ENCODE measurements at regions of chr5 and their contacts with region 1.

Region 1: DNA sequence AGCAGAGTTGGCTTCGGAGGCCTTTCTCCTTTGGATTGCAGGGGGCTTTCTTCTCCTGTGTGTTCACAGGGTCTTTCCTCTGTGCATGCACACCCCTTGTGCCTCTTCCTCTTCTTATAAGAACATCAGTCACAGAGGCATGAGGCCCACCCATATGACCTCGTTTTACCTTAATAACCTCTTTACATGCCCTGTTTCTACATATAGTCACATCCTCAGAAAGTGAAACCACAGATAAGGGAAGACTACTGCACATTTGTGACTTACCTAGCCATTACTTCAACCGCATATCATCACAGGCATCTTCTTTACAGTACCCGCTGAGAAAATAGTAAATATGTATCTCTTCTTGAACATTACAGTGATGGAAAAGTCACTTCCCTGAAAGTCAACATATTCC is 204.9 kb upstream of the TARS1 start:
- DNase-seq: no peak
- H3K4me3 Mint-ChIP-seq: no peak overlapping the region
- H3K27ac Mint-ChIP-seq: peak overlapping the region; percentile 30
- H3K4me1 Mint-ChIP-seq: peaks cover 28% of the 10 kb centered on the region
- H3K27me3 Mint-ChIP-seq: no peaks in the 10 kb centered on the region

Region 2: DNA sequence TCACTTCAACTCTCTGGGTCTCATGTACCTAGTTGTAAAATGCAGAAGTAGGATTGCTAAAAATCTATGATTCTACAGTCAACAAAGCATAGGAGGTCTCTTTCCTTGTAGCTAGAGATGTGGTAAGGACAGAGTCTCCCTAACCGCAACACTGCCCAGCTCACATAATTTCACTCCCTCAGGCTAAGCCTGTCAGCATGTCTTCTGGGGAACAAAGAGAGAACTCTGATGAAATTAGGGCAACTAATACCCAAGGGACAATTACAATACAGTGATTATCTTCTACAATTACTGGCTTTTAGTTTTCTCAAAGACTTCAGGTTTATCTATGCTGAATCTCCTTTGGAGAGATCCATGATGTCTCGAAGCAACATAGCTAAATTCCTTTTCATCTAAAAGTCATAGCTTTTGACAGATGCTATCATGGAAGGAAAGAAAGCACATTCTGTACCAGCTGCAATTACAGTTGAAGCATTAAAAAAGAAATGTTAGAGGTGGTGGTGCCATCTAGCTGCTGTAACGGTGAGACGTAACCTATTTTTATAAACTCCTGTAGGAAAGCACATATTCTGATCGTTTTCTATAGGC is 63.9 kb after region 1 on chr5:
- intact Hi-C with region 1: loop called (anchors 5 kb)
- DNase-seq: no peak
- H3K4me3 Mint-ChIP-seq: no peak overlapping the region
- H3K27ac Mint-ChIP-seq: peak overlapping the region; percentile 24
- H3K4me1 Mint-ChIP-seq: peaks cover 9% of the 10 kb centered on the region
- H3K27me3 Mint-ChIP-seq: peaks cover 3% of the 10 kb centered on the region